CD8-positive, alpha-beta T cell (primary cell): ENCODE measurements at regions of chr13 and their contacts with region 1.

Region 1: DNA sequence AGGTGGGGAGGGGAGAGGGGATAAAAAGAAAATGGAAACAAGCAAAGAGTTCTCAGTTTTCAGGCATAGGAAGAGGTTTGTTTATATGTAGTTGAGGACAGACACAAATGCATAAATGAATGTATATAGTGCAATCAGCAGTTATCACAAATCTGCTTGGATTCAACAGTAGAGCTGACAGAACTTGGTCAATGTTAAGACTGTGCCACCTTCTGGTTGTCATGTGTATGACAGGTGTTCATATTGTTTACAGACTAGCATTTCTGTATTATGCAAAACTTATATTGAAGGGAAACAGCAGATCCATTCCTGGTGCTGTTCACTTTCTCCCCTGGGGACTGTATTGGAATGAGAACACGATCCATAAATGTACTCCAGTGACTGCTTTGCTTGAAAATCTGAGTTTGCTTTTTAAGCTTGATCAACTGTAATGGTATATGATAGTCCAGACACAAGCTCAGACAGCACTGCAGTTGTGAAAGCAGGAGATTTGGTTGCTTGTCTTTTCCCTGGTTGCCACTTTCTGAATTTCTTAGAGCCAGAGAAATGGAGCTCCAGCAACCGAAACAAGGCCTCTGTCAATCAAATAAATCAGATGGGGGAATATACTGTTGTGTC is 319.5 kb upstream of the OBI1 start:
- DNase-seq: peak in 5 of 9 experiments; percentile 3 to 60 (median 22)
- ATAC-seq: peak; percentile 65
- H3K4me3 ChIP-seq: no peak overlapping the region
- H3K4me3 Mint-ChIP-seq: no peak overlapping the region
- H3K27ac ChIP-seq: no peak overlapping the region
- H3K27ac Mint-ChIP-seq: no peak overlapping the region
- H3K4me1 ChIP-seq: no peaks in the 10 kb centered on the region
- H3K4me1 Mint-ChIP-seq: no peaks in the 10 kb centered on the region
- H3K27me3 ChIP-seq: no peaks in the 10 kb centered on the region
- H3K27me3 Mint-ChIP-seq: peaks cover 27% of the 10 kb centered on the region
- CTCF ChIP-seq: peak; percentile 74

Region 2: DNA sequence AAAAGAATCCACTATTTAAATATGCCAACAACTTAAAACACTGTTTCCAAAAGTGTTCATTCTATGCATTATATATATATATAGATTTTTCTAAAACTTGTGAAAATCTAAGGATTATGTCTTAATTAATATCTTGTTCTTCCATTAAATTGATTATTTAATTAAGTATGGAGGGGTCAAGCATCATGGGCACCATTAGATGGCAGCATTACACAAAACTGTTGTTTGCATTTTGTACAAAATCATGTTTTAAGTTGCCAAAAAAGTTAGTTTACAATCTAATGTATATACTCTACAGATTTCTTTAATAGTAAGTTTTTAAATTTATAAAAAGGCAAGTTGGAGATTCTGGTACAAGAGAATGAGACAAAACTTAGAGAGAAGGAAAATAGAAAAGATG is 846.7 kb before region 1 on chr13:
- CTCF ChIA-PET with region 1: interaction called, 35 read pairs
- POLR2A ChIA-PET with region 1: no interaction called
- intact Hi-C with region 1: loop called (anchors 1 kb)
- DNase-seq: no peak
- ATAC-seq: no peak
- H3K4me3 ChIP-seq: no peak overlapping the region
- H3K4me3 Mint-ChIP-seq: no peak overlapping the region
- H3K27ac ChIP-seq: no peak overlapping the region
- H3K27ac Mint-ChIP-seq: no peak overlapping the region
- H3K4me1 ChIP-seq: no peaks in the 10 kb centered on the region
- H3K4me1 Mint-ChIP-seq: no peaks in the 10 kb centered on the region
- H3K27me3 ChIP-seq: no peaks in the 10 kb centered on the region
- H3K27me3 Mint-ChIP-seq: peaks cover 5% of the 10 kb centered on the region
- CTCF ChIP-seq: no peak

Region 3: GRCh38 chr13:78147905-78148304 is 830.6 kb before region 1 on chr13:
- CTCF ChIA-PET with region 1: interaction called, 12 read pairs
- POLR2A ChIA-PET with region 1: no interaction called
- intact Hi-C with region 1: no loop called
- DNase-seq: no peak
- ATAC-seq: no peak
- H3K4me3 ChIP-seq: no peak overlapping the region
- H3K4me3 Mint-ChIP-seq: no peak overlapping the region
- H3K27ac ChIP-seq: no peak overlapping the region
- H3K27ac Mint-ChIP-seq: no peak overlapping the region
- H3K4me1 ChIP-seq: no peaks in the 10 kb centered on the region
- H3K4me1 Mint-ChIP-seq: no peaks in the 10 kb centered on the region
- H3K27me3 ChIP-seq: no peaks in the 10 kb centered on the region
- H3K27me3 Mint-ChIP-seq: peaks cover 4% of the 10 kb centered on the region
- CTCF ChIP-seq: no peak

Region 4: DNA sequence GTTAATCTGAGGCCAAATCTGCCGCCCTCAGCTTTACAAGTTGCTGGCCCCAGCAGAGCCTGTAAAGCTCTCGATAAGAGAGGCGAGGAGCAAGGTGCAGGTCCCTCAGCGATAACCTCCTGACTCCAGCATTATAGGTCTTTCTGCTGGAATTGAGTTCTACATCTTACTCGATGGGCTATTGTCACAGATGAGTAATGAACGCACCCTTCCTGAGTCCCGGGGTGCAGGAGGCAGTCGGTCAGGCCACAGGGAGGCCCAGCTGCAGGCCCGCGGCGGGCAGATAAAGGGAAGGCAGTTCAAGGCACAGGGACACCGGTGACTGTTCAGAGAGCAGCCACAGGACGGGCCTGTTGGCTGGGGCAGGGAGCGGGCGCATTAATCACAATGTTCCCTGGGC is 161.9 kb before region 1 on chr13:
- CTCF ChIA-PET with region 1: no interaction called
- POLR2A ChIA-PET with region 1: no interaction called
- intact Hi-C with region 1: no loop called
- DNase-seq: no peak
- ATAC-seq: no peak
- H3K4me3 ChIP-seq: no peak overlapping the region
- H3K4me3 Mint-ChIP-seq: no peak overlapping the region
- H3K27ac ChIP-seq: no peak overlapping the region
- H3K27ac Mint-ChIP-seq: no peak overlapping the region
- H3K4me1 ChIP-seq: no peaks in the 10 kb centered on the region
- H3K4me1 Mint-ChIP-seq: no peaks in the 10 kb centered on the region
- H3K27me3 ChIP-seq: peaks cover 0 to 3% of the 10 kb centered on the region in 2 experiments
- H3K27me3 Mint-ChIP-seq: peaks cover 4% of the 10 kb centered on the region
- CTCF ChIP-seq: no peak

Region 5: DNA sequence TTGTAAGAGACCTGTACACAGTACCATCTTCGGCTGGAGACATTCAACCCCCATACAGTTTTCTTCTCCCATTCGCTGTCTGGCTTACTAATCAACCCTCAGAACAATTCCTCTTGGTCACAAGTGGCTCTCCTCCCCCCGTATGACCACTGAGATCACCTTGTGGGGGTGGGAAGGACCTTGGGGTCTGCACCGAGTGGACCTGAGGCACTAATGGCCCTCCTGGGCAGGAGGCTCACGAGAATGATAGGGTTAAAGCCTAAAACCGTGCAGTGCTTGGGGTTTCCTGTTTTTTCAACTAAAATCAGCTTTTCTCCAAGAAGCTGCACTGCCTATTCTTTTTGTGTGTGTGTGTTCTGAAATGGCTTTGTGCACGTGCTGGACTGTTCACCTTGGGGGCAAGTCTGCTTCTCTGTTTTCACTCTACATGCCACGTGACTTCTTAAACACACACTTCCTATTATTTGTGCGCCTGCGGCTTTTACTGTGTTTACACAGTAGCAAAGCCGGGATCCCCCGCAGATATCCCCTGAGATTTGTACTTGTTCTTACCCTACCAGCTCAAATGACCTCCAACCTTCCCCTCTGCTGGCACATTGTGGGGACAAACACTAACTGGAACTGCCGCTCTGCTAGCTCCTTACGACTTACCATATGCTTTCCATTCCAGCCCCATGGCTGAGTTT is 415.2 kb after region 1 on chr13:
- CTCF ChIA-PET with region 1: no interaction called
- POLR2A ChIA-PET with region 1: no interaction called
- intact Hi-C with region 1: loop called in 1 of 2 experiments (anchors 1 kb)
- DNase-seq: peak in 8 of 9 experiments; percentile 21 to 83 (median 60)
- ATAC-seq: peak; percentile 66
- H3K4me3 ChIP-seq: peak overlapping the region; percentile 15 to 59
- H3K4me3 Mint-ChIP-seq: peak overlapping the region; percentile 84
- H3K27ac ChIP-seq: peak overlapping the region; percentile 42 to 49
- H3K27ac Mint-ChIP-seq: peak overlapping the region; percentile 95
- H3K4me1 ChIP-seq: peaks cover 58% of the 10 kb centered on the region
- H3K4me1 Mint-ChIP-seq: peaks cover 69% of the 10 kb centered on the region
- H3K27me3 ChIP-seq: no peaks in the 10 kb centered on the region
- H3K27me3 Mint-ChIP-seq: no peaks in the 10 kb centered on the region
- CTCF ChIP-seq: no peak